Transverse colon (tissue), 4 donors: ENCODE measurements at regions of chr10 and their contacts with region 1.

Region 1: DNA sequence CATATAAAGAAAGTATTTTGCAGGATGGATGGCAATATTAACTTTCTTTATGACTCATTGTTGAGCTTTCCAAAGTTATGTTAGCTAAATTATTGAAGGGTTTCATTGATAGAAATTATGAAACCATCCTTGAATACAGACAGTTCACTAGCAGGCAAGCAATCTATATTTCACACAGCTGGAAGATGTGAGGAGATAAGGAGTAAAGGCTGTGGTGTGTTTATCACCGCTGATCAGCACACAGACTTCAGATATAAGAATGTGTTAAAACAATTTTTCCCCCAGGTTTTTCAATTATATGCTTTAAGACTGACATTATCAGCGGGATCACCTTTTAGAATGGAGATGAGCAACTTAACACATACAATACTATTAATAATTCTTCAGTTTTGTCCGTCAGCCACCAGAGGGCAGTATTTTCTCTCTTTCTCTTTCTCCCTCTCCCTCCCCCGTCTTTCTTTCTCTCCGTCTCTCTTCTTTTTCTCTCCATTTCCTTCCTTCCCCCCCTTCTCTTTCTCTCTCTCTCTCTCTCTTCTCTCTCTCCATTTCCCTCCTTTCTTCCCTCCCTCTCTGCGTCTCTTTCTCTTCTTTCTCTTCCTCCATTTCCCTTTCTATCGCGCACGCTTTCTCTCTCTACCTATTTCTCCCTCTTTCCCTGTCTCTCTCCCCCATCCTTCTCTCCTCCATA is 62.9 kb upstream of the FAM171A1 start:
- DNase-seq: no peak
- H3K4me3 ChIP-seq: peak overlapping the region in 2 of 4 donors; percentile 15 to 43
- H3K27ac ChIP-seq: no peak overlapping the region
- H3K4me1 ChIP-seq: no peaks in the 10 kb centered on the region
- H3K27me3 ChIP-seq: no peaks in the 10 kb centered on the region
- CTCF ChIP-seq: peak; percentile 71 to 79 (median 74)
- EP300 ChIP-seq: no peak
- POLR2A ChIP-seq: no peak

Region 2: DNA sequence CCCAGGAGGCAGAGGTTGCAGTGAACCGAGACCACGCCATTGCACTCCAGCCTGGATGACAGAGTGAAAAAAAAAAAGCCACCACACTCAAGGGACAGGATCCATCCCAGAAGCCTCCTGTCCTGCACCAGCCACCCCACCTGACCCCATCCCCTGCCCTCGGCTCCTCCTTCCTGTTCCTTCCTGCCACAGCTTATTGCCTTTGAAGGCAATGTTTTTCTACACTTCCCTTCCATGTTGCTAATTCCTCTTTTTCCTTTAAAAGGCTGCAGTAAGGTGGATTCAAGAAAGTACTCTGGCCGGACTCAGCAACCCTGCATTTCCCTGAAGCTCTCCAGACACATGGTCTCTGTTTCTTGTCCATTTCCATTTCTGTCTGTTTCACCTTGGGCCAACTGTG is 143.8 kb before region 1 on chr10:
- in situ Hi-C with region 1: no loop called
- intact Hi-C with region 1: no loop called
- DNase-seq: no peak
- H3K4me3 ChIP-seq: no peak overlapping the region
- H3K27ac ChIP-seq: no peak overlapping the region
- H3K4me1 ChIP-seq: peaks cover 0 to 5% (median 0%) of the 10 kb centered on the region in 4 donors
- H3K27me3 ChIP-seq: no peaks in the 10 kb centered on the region
- CTCF ChIP-seq: no peak
- EP300 ChIP-seq: no peak
- POLR2A ChIP-seq: no peak

Region 3: GRCh38 chr10:15344876-15345285 is 89.1 kb before region 1 on chr10:
- in situ Hi-C with region 1: no loop called
- intact Hi-C with region 1: no loop called
- DNase-seq: no peak
- H3K4me3 ChIP-seq: no peak overlapping the region
- H3K27ac ChIP-seq: peak overlapping the region; percentile 30 to 88 (median 70)
- H3K4me1 ChIP-seq: peaks cover 27 to 54% (median 34%) of the 10 kb centered on the region in 4 donors
- H3K27me3 ChIP-seq: no peaks in the 10 kb centered on the region
- CTCF ChIP-seq: no peak
- EP300 ChIP-seq: no peak
- POLR2A ChIP-seq: no peak

Region 4: GRCh38 chr10:15719899-15720634 is 286.1 kb after region 1 on chr10 and contains the start of gene ITGA8:
- in situ Hi-C with region 1: loop called (anchors 10 to 25 kb)
- intact Hi-C with region 1: no loop called
- DNase-seq: peak; percentile 47
- H3K4me3 ChIP-seq: peak within 1 kb of the TSS; percentile 20 to 51 (median 40)
- H3K27ac ChIP-seq: peak within 1 kb of the TSS; percentile 56 to 72 (median 66)
- H3K4me1 ChIP-seq: peaks cover 0 to 12% (median 0%) of the 10 kb centered on the region in 4 donors
- H3K27me3 ChIP-seq: peaks cover 44% of the 10 kb centered on the region
- CTCF ChIP-seq: peak; percentile 28 to 41 (median 33)
- EP300 ChIP-seq: no peak
- POLR2A ChIP-seq: no peak
- total RNA-seq, gene ITGA8: 1.4 to 4.9 (median 3.3) TPM in 3 of 4 donors, not detected in the other